A549 (cell line): ENCODE measurements at regions of chr19 and their contacts with region 1.

Region 1: GRCh38 chr19:41353466-41354342 is at the start of gene TGFB1:
- DNase-seq: peak; percentile 92 to 100
- ATAC-seq: peak; percentile 53 to 71
- H3K4me3 ChIP-seq: peak within 1 kb of the TSS; percentile 72
- H3K27ac ChIP-seq: peak within 1 kb of the TSS; percentile 90 to 92
- H3K4me1 ChIP-seq: peaks cover 15% of the 10 kb centered on the region
- CTCF ChIP-seq: peak; percentile 99
- EP300 ChIP-seq: peak in 1 of 2 experiments; percentile 42; a peak in 1 of 5 replicates
- POLR2A ChIP-seq: peak; percentile 63
- RAD21 ChIP-seq: peak in 1 of 2 experiments; percentile 76; a peak in 4 of 5 replicates
- polyA plus RNA-seq, gene TGFB1: 6.0 and 13.2 TPM in 2 replicates

Region 2: GRCh38 chr19:41155194-41155593 is 198.5 kb before region 1 on chr19:
- CTCF ChIA-PET with region 1: no interaction called
- POLR2A ChIA-PET with region 1: no interaction called
- DNase-seq: no peak
- ATAC-seq: no peak
- H3K4me3 ChIP-seq: no peak overlapping the region
- H3K27ac ChIP-seq: no peak overlapping the region
- H3K4me1 ChIP-seq: peaks cover 15% of the 10 kb centered on the region
- CTCF ChIP-seq: no peak
- EP300 ChIP-seq: no peak
- POLR2A ChIP-seq: no peak
- RAD21 ChIP-seq: no peak

Region 3: DNA sequence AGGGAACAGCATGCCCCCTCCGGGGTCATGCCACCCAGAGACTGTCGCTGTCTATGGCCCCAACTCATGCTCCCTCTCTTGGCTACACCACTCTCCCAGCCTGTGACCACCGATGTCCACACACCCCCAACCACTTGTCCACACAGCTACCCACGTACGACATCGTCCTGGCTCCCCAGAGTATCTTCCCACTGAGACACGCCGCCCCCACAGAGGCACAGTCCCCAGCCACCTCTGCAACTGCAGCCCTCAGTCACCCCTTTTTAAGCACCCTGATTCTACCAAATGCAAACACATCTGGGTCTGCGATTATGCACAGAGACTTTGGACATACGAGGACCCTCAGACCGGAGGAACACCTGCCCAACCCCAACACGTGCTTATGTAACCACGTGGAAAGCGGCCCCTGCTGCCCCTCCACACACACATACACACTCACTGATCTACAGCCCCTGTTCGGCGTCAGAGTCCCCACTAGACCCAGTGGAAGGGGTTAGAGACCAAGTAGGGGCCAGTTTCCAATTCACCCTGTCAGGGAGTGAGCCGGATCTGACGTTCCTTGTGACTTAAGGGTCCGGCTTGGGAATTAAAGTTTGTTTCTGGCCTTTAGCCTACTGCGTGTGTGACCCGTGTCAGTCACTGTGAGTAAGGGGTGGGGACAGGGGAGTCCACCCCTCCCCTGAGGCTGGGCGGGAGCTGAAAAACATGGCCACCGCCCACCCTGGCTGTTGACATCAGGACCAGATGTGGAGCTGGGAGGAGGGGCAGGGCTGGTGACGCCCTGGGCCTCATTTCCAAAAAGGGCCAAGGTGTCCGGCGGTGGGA is 146.6 kb before region 1 on chr19:
- CTCF ChIA-PET with region 1: interaction called, 31 read pairs
- POLR2A ChIA-PET with region 1: no interaction called
- DNase-seq: no peak
- ATAC-seq: no peak
- H3K4me3 ChIP-seq: no peak overlapping the region
- H3K27ac ChIP-seq: no peak overlapping the region
- H3K4me1 ChIP-seq: no peaks in the 10 kb centered on the region
- CTCF ChIP-seq: no peak
- EP300 ChIP-seq: no peak
- POLR2A ChIP-seq: no peak
- RAD21 ChIP-seq: no peak

Region 4: DNA sequence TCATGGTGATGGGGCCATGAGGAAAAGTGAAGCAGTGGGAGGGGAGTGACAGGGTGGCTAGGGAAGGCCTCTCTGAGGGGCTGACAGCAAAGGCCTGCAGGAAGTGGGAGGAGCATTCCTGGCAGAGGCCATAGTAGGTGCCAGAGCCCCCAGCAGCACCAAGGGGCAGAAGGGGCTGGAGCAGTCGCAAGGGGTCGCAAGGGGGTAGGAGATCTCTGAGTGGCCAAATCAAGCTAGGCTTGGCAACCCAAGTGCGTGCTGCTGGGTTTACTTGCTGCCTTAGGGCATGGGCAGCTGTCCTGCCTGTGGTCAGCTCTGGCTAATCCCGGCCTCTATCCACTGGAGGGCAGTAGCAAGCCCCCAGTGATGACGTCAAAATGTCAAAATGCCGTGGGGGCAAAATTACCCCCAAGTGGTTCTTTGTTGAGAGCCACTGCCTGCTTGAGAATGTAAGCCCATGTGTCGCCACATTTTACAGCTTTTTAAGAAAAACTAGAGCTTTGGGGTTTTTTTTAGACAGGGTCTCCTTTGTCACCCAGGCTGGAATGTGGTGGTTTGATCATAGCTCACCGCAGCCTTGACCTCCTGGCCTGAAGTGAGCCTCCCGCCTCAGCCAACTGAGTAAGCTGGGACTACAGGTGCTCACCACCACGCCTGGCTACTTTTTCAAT is 32.0 kb before region 1 on chr19:
- CTCF ChIA-PET with region 1: interaction called, 295 read pairs
- POLR2A ChIA-PET with region 1: interaction called, 23 read pairs
- DNase-seq: peak; percentile 76 to 95
- ATAC-seq: peak; percentile 10 to 53; a peak in 3 of 6 replicates
- H3K4me3 ChIP-seq: no peak overlapping the region
- H3K27ac ChIP-seq: peak overlapping the region; percentile 81 to 91; a peak in 5 of 6 replicates
- H3K4me1 ChIP-seq: peaks cover 56% of the 10 kb centered on the region
- CTCF ChIP-seq: peak; percentile 88
- EP300 ChIP-seq: no peak
- POLR2A ChIP-seq: no peak
- RAD21 ChIP-seq: peak; percentile 61 to 62; a peak in 4 of 5 replicates

Region 5: GRCh38 chr19:41334793-41335192 is 18.9 kb before region 1 on chr19:
- CTCF ChIA-PET with region 1: interaction called, 295 read pairs
- POLR2A ChIA-PET with region 1: interaction called, 3 read pairs
- DNase-seq: no peak
- ATAC-seq: no peak
- H3K4me3 ChIP-seq: no peak overlapping the region
- H3K27ac ChIP-seq: no peak overlapping the region
- H3K4me1 ChIP-seq: peaks cover 2% of the 10 kb centered on the region; the same call in 2 of the 3 replicates
- CTCF ChIP-seq: no peak
- EP300 ChIP-seq: no peak
- POLR2A ChIP-seq: no peak
- RAD21 ChIP-seq: no peak

Region 6: GRCh38 chr19:41363753-41364523 is 10.2 kb after region 1 on chr19 and contains the start of gene B9D2:
- CTCF ChIA-PET with region 1: interaction called, 197 read pairs
- POLR2A ChIA-PET with region 1: interaction called, 96 read pairs
- DNase-seq: peak; percentile 100
- ATAC-seq: peak; percentile 89 to 93
- H3K4me3 ChIP-seq: peak within 1 kb of the TSS; percentile 66
- H3K27ac ChIP-seq: peak within 1 kb of the TSS; percentile 92 to 94
- H3K4me1 ChIP-seq: peaks cover 49% of the 10 kb centered on the region
- CTCF ChIP-seq: no peak
- EP300 ChIP-seq: no peak
- POLR2A ChIP-seq: peak; percentile 80
- RAD21 ChIP-seq: no peak
- polyA plus RNA-seq, gene B9D2: 17.5 and 19.6 TPM in 2 replicates

Region 7: GRCh38 chr19:41386442-41386841 is 32.7 kb after region 1 on chr19:
- CTCF ChIA-PET with region 1: interaction called, 13 read pairs
- POLR2A ChIA-PET with region 1: no interaction called
- DNase-seq: no peak
- ATAC-seq: peak in 1 of 2 experiments; percentile 27; a peak in 1 of 6 replicates
- H3K4me3 ChIP-seq: no peak overlapping the region
- H3K27ac ChIP-seq: no peak overlapping the region
- H3K4me1 ChIP-seq: no peaks in the 10 kb centered on the region
- CTCF ChIP-seq: no peak
- EP300 ChIP-seq: no peak
- POLR2A ChIP-seq: no peak
- RAD21 ChIP-seq: no peak